GM12878 (cell line): ENCODE measurements at regions of chr12 and their contacts with region 1.

Region 1: DNA sequence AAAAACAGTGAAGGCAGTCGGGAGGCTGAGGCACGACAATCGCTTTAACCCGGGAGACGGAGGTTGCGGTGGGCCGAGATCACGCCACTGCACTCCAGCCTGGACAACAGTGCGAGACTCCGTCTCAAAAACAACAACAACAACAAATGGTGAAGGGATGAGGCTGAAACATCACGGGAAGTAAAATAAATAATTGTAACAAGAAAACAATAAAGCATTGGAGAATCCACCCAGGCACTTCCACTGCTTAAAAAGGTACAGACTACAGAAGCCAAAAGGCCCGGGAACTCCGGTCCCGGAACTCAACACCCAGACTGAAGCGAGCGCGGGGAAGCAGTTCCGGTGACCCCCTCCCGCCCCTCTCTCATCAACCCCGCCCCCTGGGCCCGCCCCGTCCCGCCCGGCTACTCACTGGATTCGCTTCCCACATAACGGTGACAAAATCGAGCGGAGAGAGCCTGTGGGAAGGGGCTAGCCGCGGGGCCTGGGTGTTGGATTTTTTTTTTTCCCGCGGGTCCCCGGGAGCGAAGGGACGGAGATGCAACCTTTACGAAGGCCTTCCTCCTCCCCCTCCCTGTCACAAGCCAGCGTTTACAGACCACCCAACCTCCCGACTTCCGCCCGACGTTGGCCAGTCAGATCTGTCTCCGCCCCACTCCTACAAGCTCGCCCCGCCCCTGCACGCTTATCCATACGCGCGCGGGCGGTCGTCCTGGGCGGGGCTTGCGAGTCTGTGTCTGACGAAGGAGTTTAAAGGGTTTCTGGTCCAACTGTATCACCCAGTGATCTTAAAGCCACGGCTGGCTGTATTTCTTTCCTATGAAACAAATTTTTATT is at the start of gene PARP11:
- DNase-seq: peak; percentile 87
- ATAC-seq: peak; percentile 98
- H3K4me3 ChIP-seq: peak within 1 kb of the TSS; percentile 91
- H3K27ac ChIP-seq: peak within 1 kb of the TSS; percentile 92
- H3K4me1 ChIP-seq: peaks cover 13% of the 10 kb centered on the region
- H3K27me3 ChIP-seq: no peaks in the 10 kb centered on the region
- CTCF ChIP-seq: no peak
- EP300 ChIP-seq: 0 out of 4 replicates have a peak, but pooled peaks of 1 of the 2 experiments have one; percentile 19
- POLR2A ChIP-seq: peak; percentile 77
- RAD21 ChIP-seq: no peak
- polyA plus RNA-seq, gene PARP11: 3.7 to 5.5 TPM

Region 2: GRCh38 chr12:3752741-3753486 is 120.1 kb before region 1 on chr12 and contains the start of gene CRACR2A:
- CTCF ChIA-PET with region 1: no interaction called
- POLR2A ChIA-PET with region 1: no interaction called
- RAD21 ChIA-PET with region 1: no interaction called
- SMC1A ChIA-PET with region 1: no interaction called
- in situ Hi-C with region 1: no loop called
- intact Hi-C with region 1: loop called (anchors 5 kb)
- DNase-seq: peak; percentile 31
- ATAC-seq: peak; percentile 96
- H3K4me3 ChIP-seq: peak within 1 kb of the TSS; percentile 80
- H3K27ac ChIP-seq: peak within 1 kb of the TSS; percentile 90
- H3K4me1 ChIP-seq: peaks cover 8% of the 10 kb centered on the region
- H3K27me3 ChIP-seq: no peaks in the 10 kb centered on the region
- CTCF ChIP-seq: peak; percentile 76 to 82 (median 80)
- EP300 ChIP-seq: no peak
- POLR2A ChIP-seq: peak; percentile 84
- RAD21 ChIP-seq: peak; percentile 51
- polyA plus RNA-seq, gene CRACR2A: 2.1 to 4.2 TPM

Region 3: GRCh38 chr12:4311776-4312175 is 438.8 kb after region 1 on chr12:
- CTCF ChIA-PET with region 1: no interaction called
- POLR2A ChIA-PET with region 1: interaction called, 10 read pairs
- RAD21 ChIA-PET with region 1: no interaction called
- SMC1A ChIA-PET with region 1: no interaction called
- in situ Hi-C with region 1: no loop called
- intact Hi-C with region 1: no loop called
- DNase-seq: no peak
- ATAC-seq: no peak
- H3K4me3 ChIP-seq: no peak overlapping the region
- H3K27ac ChIP-seq: no peak overlapping the region
- H3K4me1 ChIP-seq: peaks cover 6% of the 10 kb centered on the region; the same call in 1 of the 2 replicates
- H3K27me3 ChIP-seq: no peaks in the 10 kb centered on the region
- CTCF ChIP-seq: no peak
- EP300 ChIP-seq: no peak
- POLR2A ChIP-seq: no peak
- RAD21 ChIP-seq: no peak